CD8-positive, alpha-beta T cell (primary cell): ENCODE measurements at regions of chr4 and their contacts with region 1.

Region 1: GRCh38 chr4:97500423-97500822 is 642.9 kb downstream of the STPG2 start:
- DNase-seq: no peak
- ATAC-seq: no peak
- H3K4me3 ChIP-seq: no peak overlapping the region
- H3K4me3 Mint-ChIP-seq: no peak overlapping the region
- H3K27ac ChIP-seq: no peak overlapping the region
- H3K27ac Mint-ChIP-seq: no peak overlapping the region
- H3K4me1 ChIP-seq: no peaks in the 10 kb centered on the region
- H3K4me1 Mint-ChIP-seq: no peaks in the 10 kb centered on the region
- H3K27me3 ChIP-seq: no peaks in the 10 kb centered on the region
- H3K27me3 Mint-ChIP-seq: no peaks in the 10 kb centered on the region
- CTCF ChIP-seq: no peak

Region 2: DNA sequence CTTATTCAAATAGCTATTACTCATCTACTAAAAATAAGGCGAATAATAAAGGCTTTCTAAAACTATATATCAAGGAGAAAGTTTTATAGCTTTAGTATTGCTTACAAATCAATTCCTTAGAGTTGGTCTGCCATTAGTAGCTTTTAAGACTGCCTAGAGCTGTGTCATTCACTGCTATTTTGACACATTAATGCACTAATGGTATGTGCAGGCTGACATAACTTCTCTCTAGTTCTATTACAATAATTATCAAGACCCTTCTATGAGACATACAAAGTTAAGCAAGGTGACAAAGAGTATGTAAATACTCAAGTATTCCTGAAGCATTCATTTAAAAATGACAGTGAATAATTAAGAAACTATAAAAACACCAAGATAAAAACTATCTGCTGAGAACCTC is 17.5 kb after region 1 on chr4:
- CTCF ChIA-PET with region 1: no interaction called
- POLR2A ChIA-PET with region 1: no interaction called
- intact Hi-C with region 1: loop called in 1 of 2 experiments (anchors 1 kb)
- DNase-seq: no peak
- ATAC-seq: no peak
- H3K4me3 ChIP-seq: no peak overlapping the region
- H3K4me3 Mint-ChIP-seq: no peak overlapping the region
- H3K27ac ChIP-seq: no peak overlapping the region
- H3K27ac Mint-ChIP-seq: no peak overlapping the region
- H3K4me1 ChIP-seq: no peaks in the 10 kb centered on the region
- H3K4me1 Mint-ChIP-seq: no peaks in the 10 kb centered on the region
- H3K27me3 ChIP-seq: no peaks in the 10 kb centered on the region
- H3K27me3 Mint-ChIP-seq: no peaks in the 10 kb centered on the region
- CTCF ChIP-seq: no peak